ENCODE measurements at regions of chr12 and their contacts with region 1.

Region 1: DNA sequence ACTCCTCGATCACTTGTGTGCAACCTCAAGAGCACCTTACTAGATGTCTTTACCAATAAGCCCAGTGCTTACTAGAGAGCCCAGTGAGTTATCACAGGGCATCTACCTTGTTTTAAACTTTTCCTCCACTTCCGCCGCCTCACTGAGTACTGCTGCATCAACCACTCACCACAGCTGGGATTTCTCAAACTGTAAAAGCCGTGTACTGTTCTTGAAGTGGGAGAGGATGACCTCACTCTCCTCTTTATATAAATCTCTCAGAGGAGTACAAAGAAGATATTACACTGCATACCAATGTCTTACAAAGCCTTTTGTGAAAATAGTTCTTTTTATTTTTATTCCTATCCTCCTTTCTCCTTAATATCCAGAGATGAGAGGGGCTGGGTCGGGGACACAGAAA is 94.1 kb downstream of the PLCZ1 start:
- DNase-seq: no peak
- ATAC-seq: peak in 7 of 8 donors; percentile 59 to 83 (median 76)
- H3K4me3 ChIP-seq: no peak overlapping the region
- H3K27ac ChIP-seq: no peak overlapping the region
- H3K4me1 ChIP-seq: peaks cover 0 to 12% (median 0%) of the 10 kb centered on the region in 9 donors
- H3K27me3 ChIP-seq: no peaks in the 10 kb centered on the region
- CTCF ChIP-seq: no peak

Region 2: GRCh38 chr12:18737819-18738218 is 94.1 kb after region 1 on chr12 and contains the starts of genes CAPZA3 and PLCZ1:
- intact Hi-C with region 1: loop called in 1 of 10 experiments (anchors 1 kb)
- DNase-seq: no peak
- ATAC-seq: no peak
- H3K4me3 ChIP-seq: no peak within 1 kb of the TSS
- H3K27ac ChIP-seq: no peak within 1 kb of the TSS
- H3K4me1 ChIP-seq: no peaks in the 10 kb centered on the region
- H3K27me3 ChIP-seq: no peaks in the 10 kb centered on the region
- CTCF ChIP-seq: no peak
- total RNA-seq, gene CAPZA3: not detected
- total RNA-seq, gene PLCZ1: 0.32 to 1.5 (median 0.88) TPM in 3 of 10 donors, not detected in the others

Measured in heart right ventricle (tissue), 16 donors.